ENCODE measurements at regions of chr18 and their contacts with region 1.

Region 1: DNA sequence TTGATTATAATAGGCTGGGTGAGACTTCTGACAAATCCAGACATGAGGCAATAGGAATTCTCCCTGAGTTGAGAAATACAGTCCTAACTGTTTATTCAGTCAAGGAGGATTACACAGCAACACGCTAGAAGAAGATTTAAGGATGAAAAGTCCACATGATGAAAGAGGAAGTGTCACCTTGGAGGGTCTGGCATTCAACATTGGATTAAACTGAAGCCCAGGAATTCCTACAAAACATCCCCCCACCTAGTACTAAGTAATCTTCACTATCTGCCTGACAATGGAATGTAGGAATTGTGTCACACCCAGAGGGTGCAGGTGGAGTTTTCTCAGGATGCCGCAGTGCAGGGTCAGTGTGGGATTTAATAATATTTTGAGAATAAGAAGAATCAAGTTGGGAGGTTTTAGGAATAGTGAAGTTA is 142.4 kb downstream of the SOCS6 start:
- DNase-seq: no peak
- H3K4me3 ChIP-seq: no peak overlapping the region
- H3K27ac ChIP-seq: no peak overlapping the region
- H3K4me1 ChIP-seq: no peaks in the 10 kb centered on the region
- H3K27me3 ChIP-seq: no peaks in the 10 kb centered on the region
- CTCF ChIP-seq: no peak
- POLR2A ChIP-seq: no peak

Region 2: DNA sequence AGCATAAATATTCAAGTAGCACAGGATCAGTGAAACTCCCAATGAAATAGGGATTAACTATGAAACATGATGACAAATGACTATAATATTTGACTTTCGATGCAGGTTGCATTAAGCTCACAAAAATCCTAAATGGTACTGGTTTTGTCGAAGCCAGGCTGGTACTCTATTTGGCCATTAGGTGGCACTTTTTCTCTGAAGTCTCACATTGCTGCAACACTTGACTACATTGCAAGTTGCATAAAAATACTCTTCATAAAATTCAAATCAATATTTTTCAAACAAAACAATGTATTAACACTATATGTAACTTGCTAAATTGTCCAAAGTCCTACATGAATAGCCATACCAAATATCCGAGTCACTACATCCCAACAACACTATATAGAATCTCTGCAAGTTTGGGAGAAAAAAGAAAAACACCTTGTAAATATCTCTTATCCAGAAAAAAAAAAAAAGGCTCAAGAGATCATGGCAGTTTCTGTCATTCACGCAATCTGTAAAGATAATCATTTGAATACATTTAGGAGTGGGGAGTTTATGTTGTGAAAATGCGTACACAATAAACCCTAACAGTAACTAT is 235.3 kb before region 1 on chr18:
- intact Hi-C with region 1: loop called (anchors 5 kb)
- DNase-seq: no peak
- H3K4me3 ChIP-seq: no peak overlapping the region
- H3K27ac ChIP-seq: no peak overlapping the region
- H3K4me1 ChIP-seq: no peaks in the 10 kb centered on the region
- H3K27me3 ChIP-seq: no peaks in the 10 kb centered on the region
- CTCF ChIP-seq: peak in 10 of 11 experiments; percentile 28 to 75 (median 63)
- POLR2A ChIP-seq: no peak